CD4-positive, alpha-beta memory T cell (primary cell): ENCODE measurements at regions of chr12 and their contacts with region 1.

Region 1: DNA sequence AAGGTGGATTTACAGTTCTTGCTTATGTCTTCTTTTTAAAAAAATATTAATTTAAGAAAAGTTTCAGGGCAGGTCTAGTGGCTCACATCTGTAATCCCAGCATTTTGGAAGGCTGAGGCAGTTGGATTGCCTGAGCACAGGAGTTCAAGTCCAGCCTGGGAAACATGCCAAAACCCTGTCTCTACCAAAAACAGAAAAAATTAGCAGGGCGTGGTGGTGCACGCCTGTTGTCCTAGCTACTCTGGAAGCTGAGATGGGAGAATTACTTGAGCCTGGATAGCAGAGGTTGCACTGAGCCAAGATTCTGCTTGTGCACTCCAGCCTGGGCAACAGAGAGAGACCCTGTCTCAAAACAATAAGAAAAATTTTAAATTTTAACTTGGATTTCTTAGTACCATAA is 5.4 kb upstream of the TAS2R46 start:
- DNase-seq: peak in 1 of 5 donors; percentile 25
- H3K4me3 ChIP-seq: no peak overlapping the region
- H3K4me3 Mint-ChIP-seq: no peak overlapping the region
- H3K27ac ChIP-seq: no peak overlapping the region
- H3K27ac Mint-ChIP-seq: no peak overlapping the region
- H3K4me1 ChIP-seq: no peaks in the 10 kb centered on the region
- H3K4me1 Mint-ChIP-seq: peaks cover 0 to 9% (median 5%) of the 10 kb centered on the region in 4 donors
- H3K27me3 ChIP-seq: no peaks in the 10 kb centered on the region
- H3K27me3 Mint-ChIP-seq: no peaks in the 10 kb centered on the region

Region 2: GRCh38 chr12:11039171-11039570 is 28.3 kb before region 1 on chr12:
- CTCF ChIA-PET with region 1: no interaction called
- POLR2A ChIA-PET with region 1: no interaction called
- intact Hi-C with region 1: loop called (anchors 1 kb)
- DNase-seq: no peak
- H3K4me3 ChIP-seq: no peak overlapping the region
- H3K4me3 Mint-ChIP-seq: no peak overlapping the region
- H3K27ac ChIP-seq: no peak overlapping the region
- H3K27ac Mint-ChIP-seq: no peak overlapping the region
- H3K4me1 ChIP-seq: no peaks in the 10 kb centered on the region
- H3K4me1 Mint-ChIP-seq: peaks cover 0 to 16% (median 6%) of the 10 kb centered on the region in 4 donors
- H3K27me3 ChIP-seq: no peaks in the 10 kb centered on the region
- H3K27me3 Mint-ChIP-seq: no peaks in the 10 kb centered on the region